ENCODE measurements at regions of chr1 and their contacts with region 1.

Region 1: GRCh38 chr1:205775015-205775716 is at the start of gene RAB29:
- DNase-seq: peak; percentile 71 to 95 (median 85)
- ATAC-seq: peak; percentile 86
- H3K4me3 ChIP-seq: peak within 1 kb of the TSS; percentile 81 to 82
- H3K4me3 Mint-ChIP-seq: peak within 1 kb of the TSS; percentile 92
- H3K27ac ChIP-seq: peak within 1 kb of the TSS; percentile 86 to 97
- H3K27ac Mint-ChIP-seq: peak within 1 kb of the TSS; percentile 97
- H3K4me1 ChIP-seq: peaks cover 33% of the 10 kb centered on the region
- H3K4me1 Mint-ChIP-seq: peaks cover 53% of the 10 kb centered on the region
- H3K27me3 ChIP-seq: no peaks in the 10 kb centered on the region
- H3K27me3 Mint-ChIP-seq: no peaks in the 10 kb centered on the region
- CTCF ChIP-seq: no peak
- total RNA-seq, gene RAB29: 14.0 to 15.9 TPM

Region 2: GRCh38 chr1:205121660-205122488 is 653.3 kb before region 1 on chr1 and contains the start of gene RBBP5:
- CTCF ChIA-PET with region 1: no interaction called
- POLR2A ChIA-PET with region 1: interaction called, 3 read pairs
- intact Hi-C with region 1: loop called in 1 of 2 experiments (anchors 5 kb)
- DNase-seq: peak; percentile 92 to 98 (median 95)
- ATAC-seq: peak; percentile 93
- H3K4me3 ChIP-seq: peak within 1 kb of the TSS; percentile 91 to 95
- H3K4me3 Mint-ChIP-seq: peak within 1 kb of the TSS; percentile 96
- H3K27ac ChIP-seq: peak within 1 kb of the TSS; percentile 88 to 97
- H3K27ac Mint-ChIP-seq: peak within 1 kb of the TSS; percentile 100
- H3K4me1 ChIP-seq: peaks cover 26% of the 10 kb centered on the region
- H3K4me1 Mint-ChIP-seq: peaks cover 46% of the 10 kb centered on the region
- H3K27me3 ChIP-seq: no peaks in the 10 kb centered on the region
- H3K27me3 Mint-ChIP-seq: no peaks in the 10 kb centered on the region
- CTCF ChIP-seq: peak; percentile 59
- total RNA-seq, gene RBBP5: 23.9 to 25.7 TPM

Region 3: GRCh38 chr1:205582471-205583291 is 192.5 kb before region 1 on chr1:
- CTCF ChIA-PET with region 1: no interaction called
- POLR2A ChIA-PET with region 1: no interaction called
- intact Hi-C with region 1: no loop called
- DNase-seq: peak in 4 of 9 experiments; percentile 21 to 80 (median 41)
- ATAC-seq: peak; percentile 69
- H3K4me3 ChIP-seq: no peak overlapping the region
- H3K4me3 Mint-ChIP-seq: no peak overlapping the region
- H3K27ac ChIP-seq: no peak overlapping the region
- H3K27ac Mint-ChIP-seq: peak overlapping the region; percentile 35
- H3K4me1 ChIP-seq: peaks cover 20% of the 10 kb centered on the region
- H3K4me1 Mint-ChIP-seq: peaks cover 18% of the 10 kb centered on the region
- H3K27me3 ChIP-seq: no peaks in the 10 kb centered on the region
- H3K27me3 Mint-ChIP-seq: peaks cover 2% of the 10 kb centered on the region
- CTCF ChIP-seq: no peak

Region 4: GRCh38 chr1:205631727-205632373 is 143.3 kb before region 1 on chr1 and contains the start of gene ELK4:
- CTCF ChIA-PET with region 1: no interaction called
- POLR2A ChIA-PET with region 1: interaction called, 5 read pairs
- intact Hi-C with region 1: loop called (anchors 1 kb)
- DNase-seq: peak; percentile 99 to 100 (median 100)
- ATAC-seq: peak; percentile 78
- H3K4me3 ChIP-seq: peak within 1 kb of the TSS; percentile 64 to 71
- H3K4me3 Mint-ChIP-seq: peak within 1 kb of the TSS; percentile 89
- H3K27ac ChIP-seq: peak within 1 kb of the TSS; percentile 75 to 95
- H3K27ac Mint-ChIP-seq: peak within 1 kb of the TSS; percentile 99
- H3K4me1 ChIP-seq: peaks cover 37% of the 10 kb centered on the region
- H3K4me1 Mint-ChIP-seq: peaks cover 44% of the 10 kb centered on the region
- H3K27me3 ChIP-seq: no peaks in the 10 kb centered on the region
- H3K27me3 Mint-ChIP-seq: no peaks in the 10 kb centered on the region
- CTCF ChIP-seq: peak; percentile 78
- total RNA-seq, gene ELK4: 142 to 147 TPM

Region 5: DNA sequence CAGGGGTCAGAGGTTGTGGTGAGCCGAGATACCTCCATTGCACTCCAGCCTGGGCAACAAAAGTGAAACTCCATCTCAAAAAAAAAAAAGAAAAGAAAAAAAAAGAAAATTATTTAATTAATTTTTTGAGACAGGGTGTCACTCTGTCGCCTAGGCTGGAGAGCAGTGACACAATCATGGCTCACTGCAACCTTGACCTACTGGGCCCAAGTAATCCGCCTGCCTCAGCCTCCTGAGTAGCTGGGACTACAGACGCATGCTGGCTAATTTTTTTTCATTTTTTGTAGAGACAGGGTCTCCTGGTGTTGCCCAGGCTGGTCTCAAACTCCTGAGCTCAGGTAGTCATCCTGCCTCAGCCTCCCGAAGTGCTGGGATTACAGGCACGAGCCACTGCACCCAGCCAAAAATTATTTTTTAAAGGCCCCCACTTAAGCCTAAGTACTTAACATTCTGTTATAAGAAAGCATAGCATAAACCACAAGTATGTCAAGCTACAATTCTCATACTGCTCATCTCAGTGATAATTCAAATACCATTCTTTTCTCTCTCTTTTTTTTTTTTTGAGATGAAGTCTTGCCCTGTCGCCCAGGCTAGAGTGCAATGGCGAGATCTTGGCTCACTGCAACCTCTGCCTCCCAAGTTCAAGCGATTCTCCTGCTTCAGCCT is 45.1 kb before region 1 on chr1:
- CTCF ChIA-PET with region 1: interaction called, 4 read pairs
- POLR2A ChIA-PET with region 1: interaction called, 3 read pairs
- intact Hi-C with region 1: loop called in 1 of 2 experiments (anchors 5 kb)
- DNase-seq: no peak
- ATAC-seq: no peak
- H3K4me3 ChIP-seq: no peak overlapping the region
- H3K4me3 Mint-ChIP-seq: no peak overlapping the region
- H3K27ac ChIP-seq: no peak overlapping the region
- H3K27ac Mint-ChIP-seq: no peak overlapping the region
- H3K4me1 ChIP-seq: peaks cover 3% of the 10 kb centered on the region
- H3K4me1 Mint-ChIP-seq: peaks cover 55% of the 10 kb centered on the region
- H3K27me3 ChIP-seq: no peaks in the 10 kb centered on the region
- H3K27me3 Mint-ChIP-seq: no peaks in the 10 kb centered on the region
- CTCF ChIP-seq: no peak

Region 6: DNA sequence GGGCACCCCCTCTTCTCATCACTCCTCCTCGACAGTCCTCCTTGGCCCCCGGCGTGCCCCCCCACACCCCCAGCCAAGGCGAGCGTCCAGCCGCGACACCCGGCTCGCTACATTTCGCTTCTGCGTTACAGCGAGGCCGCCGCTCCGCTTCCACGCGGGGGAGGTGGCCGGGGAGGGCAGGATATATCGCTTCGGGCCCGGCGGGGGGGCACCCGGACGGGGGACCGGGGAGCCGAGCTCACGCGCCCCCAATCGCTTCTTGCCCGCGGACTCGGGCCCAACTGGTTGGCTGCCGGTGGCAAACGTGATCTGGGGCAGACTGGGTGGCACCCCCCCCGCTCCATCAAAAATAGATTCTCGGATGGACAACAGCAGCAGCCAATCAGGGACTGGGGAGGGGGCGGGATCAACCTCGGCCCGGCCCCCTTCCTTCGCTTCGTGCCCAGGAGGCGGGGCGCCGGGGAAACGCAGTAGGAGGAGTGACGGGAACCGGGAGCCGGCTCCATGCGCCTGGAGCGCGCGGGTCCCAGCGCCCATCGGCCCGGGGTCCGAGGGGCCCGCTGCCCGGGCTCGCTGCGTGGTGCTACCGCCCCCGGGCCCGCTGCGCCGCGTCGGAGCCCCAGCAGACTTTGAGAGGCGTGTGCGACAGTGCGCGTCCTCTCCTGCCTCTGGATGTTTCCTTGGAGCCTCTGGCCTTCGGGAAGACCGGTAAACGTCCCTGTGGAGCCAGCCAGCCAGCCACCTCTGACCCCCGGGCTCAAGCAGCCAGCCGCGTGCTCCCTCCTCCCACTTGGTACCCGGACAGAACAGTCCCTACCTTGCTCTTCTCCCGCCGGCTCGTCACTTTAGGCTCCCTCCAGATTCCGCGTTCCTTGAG is 38.0 kb after region 1 on chr1 and contains the start of gene SLC41A1:
- CTCF ChIA-PET with region 1: no interaction called
- POLR2A ChIA-PET with region 1: interaction called, 8 read pairs
- intact Hi-C with region 1: loop called (anchors 1 kb)
- DNase-seq: peak; percentile 82 to 97 (median 92)
- ATAC-seq: peak; percentile 94
- H3K4me3 ChIP-seq: peak within 1 kb of the TSS; percentile 78 to 82
- H3K4me3 Mint-ChIP-seq: peak within 1 kb of the TSS; percentile 91
- H3K27ac ChIP-seq: peak within 1 kb of the TSS; percentile 43 to 64
- H3K27ac Mint-ChIP-seq: peak within 1 kb of the TSS; percentile 84
- H3K4me1 ChIP-seq: peaks cover 51% of the 10 kb centered on the region
- H3K4me1 Mint-ChIP-seq: peaks cover 58% of the 10 kb centered on the region
- H3K27me3 ChIP-seq: no peaks in the 10 kb centered on the region
- H3K27me3 Mint-ChIP-seq: no peaks in the 10 kb centered on the region
- CTCF ChIP-seq: no peak
- total RNA-seq, gene SLC41A1: 36.8 to 41.7 TPM

Measured in CD8-positive, alpha-beta T cell (primary cell).